ENCODE measurements at regions of chr20 and their contacts with region 1.

Region 1: DNA sequence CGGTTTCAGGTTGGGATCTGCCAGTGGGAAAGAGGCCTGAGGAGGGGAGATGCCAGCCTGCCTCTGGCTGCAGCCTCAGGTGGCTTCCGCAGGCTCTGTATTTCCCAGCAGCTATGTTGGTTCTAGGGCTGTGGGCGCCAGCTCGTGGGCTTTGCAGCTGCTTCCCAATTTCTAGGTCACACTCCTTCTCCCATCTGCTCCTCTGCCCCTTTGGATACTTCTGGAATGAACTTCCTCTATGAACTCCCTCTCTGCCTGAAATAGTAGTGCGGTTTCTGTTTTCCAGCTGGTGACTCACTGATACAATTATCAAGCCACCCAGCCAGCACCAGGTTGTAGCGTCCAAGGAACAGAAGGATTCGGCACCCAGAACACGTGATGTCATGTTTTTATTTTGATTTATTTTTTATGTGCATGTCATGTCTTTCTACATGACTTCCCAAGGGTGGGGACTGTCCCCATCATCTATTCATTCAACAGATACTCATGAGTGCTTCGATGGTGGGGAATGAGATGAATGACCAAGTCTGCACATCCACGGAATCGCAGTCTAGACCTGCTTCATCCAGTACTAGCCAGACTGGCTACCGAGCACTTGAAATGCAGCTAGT is 38.0 kb downstream of the TGM2 start:
- DNase-seq: peak; percentile 96
- H3K4me3 ChIP-seq: no peak overlapping the region
- H3K27ac ChIP-seq: peak overlapping the region; percentile 60
- H3K4me1 ChIP-seq: peaks cover 52% of the 10 kb centered on the region
- H3K27me3 ChIP-seq: no peaks in the 10 kb centered on the region
- CTCF ChIP-seq: no peak
- POLR2A ChIP-seq: peak; percentile 40

Region 2: GRCh38 chr20:38084400-38084951 is 42.6 kb before region 1 on chr20:
- CTCF ChIA-PET with region 1: interaction called, 5 read pairs
- POLR2A ChIA-PET with region 1: no interaction called
- dilution Hi-C with region 1: no loop called
- intact Hi-C with region 1: loop called (anchors 1 kb)
- DNase-seq: peak; percentile 91
- H3K4me3 ChIP-seq: no peak overlapping the region
- H3K27ac ChIP-seq: peak overlapping the region; percentile 63
- H3K4me1 ChIP-seq: peaks cover 21% of the 10 kb centered on the region
- H3K27me3 ChIP-seq: no peaks in the 10 kb centered on the region
- CTCF ChIP-seq: no peak
- POLR2A ChIP-seq: no peak

Region 3: DNA sequence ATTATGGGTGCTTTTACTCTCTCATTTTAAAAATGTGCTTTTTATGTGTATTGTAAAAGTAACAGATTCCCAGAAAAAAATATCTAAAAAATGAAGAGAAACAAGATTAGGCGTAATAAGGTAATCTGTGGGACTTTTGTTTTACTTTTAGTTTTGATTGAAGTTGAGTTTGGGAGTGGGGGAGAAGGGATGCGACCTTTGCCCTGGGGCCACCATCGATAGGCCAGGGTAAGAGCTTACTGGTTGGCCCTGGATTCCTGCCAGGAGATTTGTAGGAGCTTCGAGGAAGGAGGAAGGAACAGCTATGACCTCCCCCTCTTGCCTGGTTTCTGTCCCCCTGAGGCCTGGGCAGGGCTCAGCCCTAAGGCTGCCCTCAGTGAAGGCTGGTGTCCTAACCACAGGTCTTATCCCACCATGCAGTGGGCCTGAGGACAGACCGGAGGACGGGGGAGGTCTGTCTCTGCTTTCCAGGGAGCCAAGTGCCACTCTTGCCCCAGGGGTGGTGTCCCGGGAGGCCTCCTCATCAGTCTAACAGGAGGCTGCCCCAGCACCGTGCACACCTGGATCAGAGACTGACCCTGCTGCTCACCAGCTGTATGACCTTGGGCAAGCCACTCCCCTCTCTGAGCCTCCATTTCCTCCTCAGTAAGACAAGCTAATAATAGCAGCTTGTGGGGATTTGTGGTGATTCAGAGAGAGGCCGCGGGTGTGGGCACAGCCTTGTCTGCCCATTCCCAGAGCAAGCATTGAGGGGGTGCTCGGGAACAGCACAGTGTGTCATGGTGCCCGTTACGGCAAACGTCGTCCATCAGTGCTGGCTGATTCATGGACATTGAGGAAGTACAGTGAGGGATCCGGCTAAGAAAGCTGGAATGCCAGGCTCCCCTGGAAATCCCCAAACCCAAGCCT is 16.8 kb after region 1 on chr20:
- CTCF ChIA-PET with region 1: interaction called, 7 read pairs
- POLR2A ChIA-PET with region 1: no interaction called
- dilution Hi-C with region 1: no loop called
- intact Hi-C with region 1: loop called (anchors 1 kb)
- DNase-seq: peak; percentile 96
- H3K4me3 ChIP-seq: no peak overlapping the region
- H3K27ac ChIP-seq: peak overlapping the region; percentile 93
- H3K4me1 ChIP-seq: peaks cover 87% of the 10 kb centered on the region
- H3K27me3 ChIP-seq: no peaks in the 10 kb centered on the region
- CTCF ChIP-seq: no peak
- POLR2A ChIP-seq: peak; percentile 69